A549 (cell line): ENCODE measurements at regions of chr1 and their contacts with region 1.

Region 1: GRCh38 chr1:39609618-39610331 is 29.7 kb downstream of the HEYL start:
- DNase-seq: peak; percentile 57 to 69
- ATAC-seq: peak; percentile 81 to 93
- H3K4me3 ChIP-seq: no peak overlapping the region
- H3K27ac ChIP-seq: no peak overlapping the region
- H3K4me1 ChIP-seq: 0 out of 3 replicates have a peak, but pooled peaks cover 3% of the 10 kb centered on the region
- CTCF ChIP-seq: peak; percentile 49
- EP300 ChIP-seq: no peak
- POLR2A ChIP-seq: no peak
- RAD21 ChIP-seq: no peak; a peak in 2 of 5 replicates

Region 2: DNA sequence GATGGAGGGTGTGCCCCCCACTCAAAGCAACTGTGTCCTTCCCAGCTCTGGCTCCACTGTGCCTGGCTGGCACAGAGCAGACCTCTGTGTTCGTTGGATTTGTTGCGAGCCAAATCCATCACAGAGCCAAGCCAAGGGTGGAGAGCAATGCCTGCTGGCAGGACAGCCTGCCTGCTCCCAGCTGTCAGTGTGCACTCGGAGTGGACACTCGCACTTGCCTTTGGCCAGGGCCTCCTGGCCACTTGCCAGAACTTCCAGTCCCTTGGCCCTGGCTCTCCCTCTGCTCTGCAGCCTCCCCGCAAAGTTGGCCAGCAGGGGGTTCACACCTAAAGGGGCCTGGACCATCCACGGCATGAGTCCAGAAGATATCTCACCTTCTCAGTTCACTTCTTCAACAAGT is 13.3 kb after region 1 on chr1:
- CTCF ChIA-PET with region 1: interaction called, 29 read pairs
- POLR2A ChIA-PET with region 1: no interaction called
- DNase-seq: no peak
- ATAC-seq: no peak
- H3K4me3 ChIP-seq: no peak overlapping the region
- H3K27ac ChIP-seq: no peak overlapping the region
- H3K4me1 ChIP-seq: no peaks in the 10 kb centered on the region
- CTCF ChIP-seq: no peak
- EP300 ChIP-seq: no peak
- POLR2A ChIP-seq: no peak
- RAD21 ChIP-seq: no peak

Region 3: GRCh38 chr1:39639305-39640130 is 29.7 kb after region 1 on chr1 and contains the start of gene HEYL:
- CTCF ChIA-PET with region 1: interaction called, 19 read pairs
- POLR2A ChIA-PET with region 1: interaction called, 13 read pairs
- DNase-seq: peak; percentile 86
- ATAC-seq: peak; percentile 96
- H3K4me3 ChIP-seq: peak within 1 kb of the TSS; percentile 56
- H3K27ac ChIP-seq: peak within 1 kb of the TSS; percentile 80 to 95
- H3K4me1 ChIP-seq: no peaks in the 10 kb centered on the region
- CTCF ChIP-seq: peak; percentile 57
- EP300 ChIP-seq: no peak
- POLR2A ChIP-seq: peak; percentile 69
- RAD21 ChIP-seq: peak in 1 of 2 experiments; percentile 27; a peak in 1 of 5 replicates
- polyA plus RNA-seq, gene HEYL: 2.2 and 2.9 TPM in 2 replicates

Region 4: DNA sequence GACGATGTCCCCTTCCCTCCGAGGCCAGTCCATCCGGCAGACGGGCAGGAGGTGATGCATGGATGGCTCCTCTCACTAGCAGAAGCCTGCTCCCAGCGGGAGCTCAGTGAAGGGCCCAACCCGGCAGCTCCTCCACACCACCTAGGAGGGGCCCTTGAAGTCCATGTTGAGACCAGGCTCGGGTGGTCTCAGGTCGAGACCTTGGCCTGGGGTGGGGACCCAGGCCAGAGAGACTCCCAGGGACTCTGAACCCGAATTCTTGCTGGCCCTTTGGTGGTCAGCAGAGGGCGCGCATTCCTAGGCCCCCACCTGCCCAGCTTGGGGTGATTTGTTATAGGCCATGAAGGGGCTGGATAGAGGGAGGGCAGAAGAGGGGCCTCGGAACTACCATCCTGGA is 62.8 kb after region 1 on chr1:
- CTCF ChIA-PET with region 1: interaction called, 18 read pairs
- POLR2A ChIA-PET with region 1: no interaction called
- DNase-seq: peak in 1 of 2 experiments; percentile 14
- ATAC-seq: peak in 1 of 2 experiments; percentile 64; a peak in 3 of 6 replicates
- H3K4me3 ChIP-seq: peak overlapping the region; percentile 42; the same call in 1 of the 3 replicates
- H3K27ac ChIP-seq: no peak overlapping the region
- H3K4me1 ChIP-seq: peaks cover 7% of the 10 kb centered on the region; the same call in 1 of the 3 replicates
- CTCF ChIP-seq: no peak; the same call in 2 of the 3 replicates
- EP300 ChIP-seq: no peak
- POLR2A ChIP-seq: no peak
- RAD21 ChIP-seq: no peak

Region 5: GRCh38 chr1:39720094-39720999 is 110.6 kb after region 1 on chr1:
- CTCF ChIA-PET with region 1: interaction called, 9 read pairs
- POLR2A ChIA-PET with region 1: interaction called, 10 read pairs
- DNase-seq: peak in 1 of 2 experiments; percentile 56
- ATAC-seq: peak; percentile 69 to 71
- H3K4me3 ChIP-seq: no peak overlapping the region
- H3K27ac ChIP-seq: no peak overlapping the region
- H3K4me1 ChIP-seq: no peaks in the 10 kb centered on the region
- CTCF ChIP-seq: peak; percentile 67
- EP300 ChIP-seq: no peak
- POLR2A ChIP-seq: no peak
- RAD21 ChIP-seq: peak; percentile 75 to 78

Region 6: GRCh38 chr1:39776400-39776713 is 166.6 kb after region 1 on chr1:
- CTCF ChIA-PET with region 1: no interaction called
- POLR2A ChIA-PET with region 1: no interaction called
- DNase-seq: no peak
- ATAC-seq: no peak
- H3K4me3 ChIP-seq: no peak overlapping the region
- H3K27ac ChIP-seq: no peak overlapping the region
- H3K4me1 ChIP-seq: no peaks in the 10 kb centered on the region
- CTCF ChIP-seq: no peak
- EP300 ChIP-seq: no peak
- POLR2A ChIP-seq: no peak
- RAD21 ChIP-seq: no peak

Region 7: GRCh38 chr1:39859859-39860812 is 250.4 kb after region 1 on chr1:
- CTCF ChIA-PET with region 1: no interaction called
- POLR2A ChIA-PET with region 1: no interaction called
- DNase-seq: no peak
- ATAC-seq: no peak
- H3K4me3 ChIP-seq: no peak overlapping the region
- H3K27ac ChIP-seq: no peak overlapping the region
- H3K4me1 ChIP-seq: no peaks in the 10 kb centered on the region
- CTCF ChIP-seq: no peak
- EP300 ChIP-seq: no peak
- POLR2A ChIP-seq: no peak
- RAD21 ChIP-seq: no peak